Activated CD4-positive, alpha-beta memory T cell treated with anti-CD3 and anti-CD28 coated beads for 36 hours (primary cell): ENCODE measurements at regions of chr16 and their contacts with region 1.

Region 1: DNA sequence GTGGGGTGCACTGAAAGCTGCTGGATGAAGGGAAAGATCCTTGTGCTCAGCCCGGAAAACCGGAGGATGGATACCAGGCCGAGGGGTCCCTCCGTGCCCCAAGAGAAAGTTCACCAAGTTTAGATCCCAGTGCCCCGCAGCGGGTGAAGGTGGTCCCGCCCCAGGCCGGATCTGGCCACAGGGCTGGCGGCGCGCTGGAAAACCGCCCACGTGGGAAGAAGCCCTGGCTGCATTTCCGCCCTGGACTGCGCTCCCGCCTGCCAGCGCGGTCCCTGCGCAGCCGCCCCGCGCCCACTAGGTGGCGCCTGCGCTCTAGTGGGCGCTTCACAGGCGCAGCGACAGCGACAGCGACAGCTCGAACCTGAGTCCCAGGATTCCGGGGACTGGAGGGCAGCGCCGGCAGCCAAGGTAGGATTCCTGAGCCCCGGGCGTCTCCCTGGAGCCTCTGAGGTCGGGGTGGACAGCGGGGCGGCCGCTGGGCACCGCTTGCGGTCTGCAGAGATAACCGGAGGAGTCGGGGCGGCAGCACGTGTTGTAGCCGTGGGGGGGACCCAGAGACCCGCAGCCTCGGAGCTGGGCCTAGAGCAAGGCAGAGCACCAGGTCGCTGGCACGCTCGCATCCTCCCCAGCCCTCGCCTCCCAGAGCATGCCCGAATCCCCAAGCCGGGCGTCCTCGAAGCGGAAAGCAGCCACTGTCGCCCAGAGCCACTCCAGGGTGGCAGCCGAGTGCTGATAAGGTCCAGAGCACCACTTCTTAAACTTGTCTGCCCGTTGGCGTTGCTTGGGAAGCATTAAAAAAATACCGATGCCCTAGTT is at the start of gene CHD9:
- DNase-seq: peak; percentile 80
- H3K4me3 Mint-ChIP-seq: peak within 1 kb of the TSS; percentile 78
- H3K27ac Mint-ChIP-seq: peak within 1 kb of the TSS; percentile 44
- H3K4me1 Mint-ChIP-seq: peaks cover 17% of the 10 kb centered on the region
- H3K27me3 Mint-ChIP-seq: no peaks in the 10 kb centered on the region
- total RNA-seq, gene CHD9: 15.0 to 15.5 TPM

Region 2: GRCh38 chr16:52948946-52949345 is 105.9 kb before region 1 on chr16:
- CTCF ChIA-PET with region 1: no interaction called
- POLR2A ChIA-PET with region 1: no interaction called
- intact Hi-C with region 1: no loop called
- DNase-seq: no peak
- H3K4me3 Mint-ChIP-seq: no peak overlapping the region
- H3K27ac Mint-ChIP-seq: no peak overlapping the region
- H3K4me1 Mint-ChIP-seq: no peaks in the 10 kb centered on the region
- H3K27me3 Mint-ChIP-seq: no peaks in the 10 kb centered on the region

Region 3: DNA sequence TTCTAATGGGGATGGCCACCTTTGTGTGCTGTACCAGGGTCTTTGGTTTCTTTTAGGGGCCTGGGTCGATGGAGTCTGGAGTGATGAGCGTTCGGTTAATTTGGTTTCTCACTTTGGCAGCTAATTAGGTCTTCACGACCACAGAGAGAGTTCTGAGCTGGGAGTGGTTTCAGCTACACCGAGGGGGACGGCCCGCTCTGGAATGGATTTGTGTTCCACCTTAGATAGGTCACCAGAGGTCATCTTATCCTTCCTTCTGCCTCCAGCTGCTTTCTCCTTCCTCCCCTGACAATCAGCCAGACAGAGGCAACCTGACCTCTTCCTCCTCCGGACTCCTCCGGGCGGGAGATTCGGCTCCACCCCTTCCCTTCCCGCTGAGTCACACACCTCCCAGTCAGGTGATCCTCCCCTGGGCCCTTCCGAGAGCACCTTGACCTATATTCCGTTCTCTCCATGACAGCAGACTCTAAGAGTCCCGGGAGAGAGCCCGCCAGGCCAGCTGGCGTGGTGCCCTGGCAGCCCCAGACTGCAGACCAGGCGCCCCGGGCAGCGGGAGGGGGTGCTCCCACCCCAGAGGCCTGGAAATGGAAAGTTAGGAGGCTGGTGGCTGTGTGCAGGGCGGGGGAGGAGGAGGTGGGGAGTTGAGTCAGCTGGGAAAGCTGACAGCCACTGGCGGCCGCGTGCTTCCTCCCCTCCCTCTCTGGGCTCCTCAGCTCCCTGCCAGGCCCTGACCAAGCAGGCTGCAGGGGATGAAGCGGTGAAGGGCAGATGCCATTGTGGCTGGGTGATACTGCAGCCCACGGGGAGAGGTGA is 44.6 kb after region 1 on chr16:
- CTCF ChIA-PET with region 1: interaction called, 18 read pairs
- POLR2A ChIA-PET with region 1: no interaction called
- intact Hi-C with region 1: loop called (anchors 1 kb)
- DNase-seq: peak; percentile 76
- H3K4me3 Mint-ChIP-seq: peak overlapping the region; percentile 69
- H3K27ac Mint-ChIP-seq: peak overlapping the region; percentile 82
- H3K4me1 Mint-ChIP-seq: peaks cover 18% of the 10 kb centered on the region
- H3K27me3 Mint-ChIP-seq: no peaks in the 10 kb centered on the region

Region 4: GRCh38 chr16:53159781-53160436 is 105.0 kb after region 1 on chr16:
- CTCF ChIA-PET with region 1: interaction called, 54 read pairs
- POLR2A ChIA-PET with region 1: interaction called, 3 read pairs
- intact Hi-C with region 1: loop called (anchors 1 kb)
- DNase-seq: no peak
- H3K4me3 Mint-ChIP-seq: no peak overlapping the region
- H3K27ac Mint-ChIP-seq: no peak overlapping the region
- H3K4me1 Mint-ChIP-seq: no peaks in the 10 kb centered on the region
- H3K27me3 Mint-ChIP-seq: no peaks in the 10 kb centered on the region

Region 5: GRCh38 chr16:53183442-53183841 is 128.6 kb after region 1 on chr16:
- CTCF ChIA-PET with region 1: no interaction called
- POLR2A ChIA-PET with region 1: no interaction called
- intact Hi-C with region 1: no loop called
- DNase-seq: no peak
- H3K4me3 Mint-ChIP-seq: no peak overlapping the region
- H3K27ac Mint-ChIP-seq: no peak overlapping the region
- H3K4me1 Mint-ChIP-seq: no peaks in the 10 kb centered on the region
- H3K27me3 Mint-ChIP-seq: no peaks in the 10 kb centered on the region

Region 6: DNA sequence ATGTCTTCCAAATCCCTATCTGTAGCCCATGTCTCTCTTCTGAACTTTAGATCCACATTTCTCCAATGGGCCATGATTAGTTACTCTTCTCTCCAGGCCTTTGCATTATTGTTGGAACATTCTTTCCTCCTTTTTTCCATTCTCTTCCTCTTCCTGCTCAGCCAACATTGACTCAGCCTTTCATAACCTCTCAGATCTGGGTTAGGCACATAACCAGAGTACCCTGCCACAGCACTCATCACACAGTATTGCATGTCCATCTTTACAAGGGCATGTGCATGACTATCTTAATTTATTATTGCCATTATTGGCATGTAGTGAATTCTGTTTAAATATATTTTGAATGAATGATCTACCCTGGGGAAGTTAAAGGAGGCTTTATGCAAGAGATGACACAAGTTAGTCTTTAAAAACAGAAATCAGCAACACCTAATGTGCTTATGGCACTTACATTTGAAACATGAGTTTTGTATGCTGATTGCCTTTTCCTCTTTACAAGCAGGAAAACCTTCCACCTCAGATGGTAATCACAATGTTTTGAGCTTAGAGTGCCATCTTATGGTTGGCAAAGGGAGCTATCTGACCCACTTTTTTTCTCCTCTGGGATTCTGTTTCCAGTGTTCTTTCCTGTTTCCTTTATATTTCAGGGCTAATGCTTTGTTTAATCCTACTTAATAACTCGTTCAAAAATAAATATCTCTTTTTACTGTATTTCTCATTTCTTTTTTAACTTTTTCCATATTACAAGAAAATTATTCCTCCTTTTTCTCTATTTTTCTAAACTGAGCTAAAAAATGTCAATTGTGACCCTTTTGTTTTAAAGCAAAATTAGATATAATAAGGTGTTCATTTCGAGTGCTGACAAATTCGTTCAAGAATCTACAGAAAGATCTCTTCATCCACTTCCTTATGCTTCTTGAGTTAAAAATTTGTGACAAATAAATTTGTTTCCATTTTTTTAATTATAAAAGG is 228.4 kb after region 1 on chr16:
- CTCF ChIA-PET with region 1: interaction called, 26 read pairs
- POLR2A ChIA-PET with region 1: no interaction called
- intact Hi-C with region 1: loop called (anchors 1 kb)
- DNase-seq: no peak
- H3K4me3 Mint-ChIP-seq: no peak overlapping the region
- H3K27ac Mint-ChIP-seq: no peak overlapping the region
- H3K4me1 Mint-ChIP-seq: no peaks in the 10 kb centered on the region
- H3K27me3 Mint-ChIP-seq: no peaks in the 10 kb centered on the region

Region 7: GRCh38 chr16:53356478-53357200 is 301.8 kb after region 1 on chr16:
- CTCF ChIA-PET with region 1: no interaction called
- POLR2A ChIA-PET with region 1: no interaction called
- intact Hi-C with region 1: no loop called
- DNase-seq: no peak
- H3K4me3 Mint-ChIP-seq: no peak overlapping the region
- H3K27ac Mint-ChIP-seq: no peak overlapping the region
- H3K4me1 Mint-ChIP-seq: peaks cover 2% of the 10 kb centered on the region
- H3K27me3 Mint-ChIP-seq: peaks cover 4% of the 10 kb centered on the region